ENCODE measurements at regions of chr17 and their contacts with region 1.

Region 1: DNA sequence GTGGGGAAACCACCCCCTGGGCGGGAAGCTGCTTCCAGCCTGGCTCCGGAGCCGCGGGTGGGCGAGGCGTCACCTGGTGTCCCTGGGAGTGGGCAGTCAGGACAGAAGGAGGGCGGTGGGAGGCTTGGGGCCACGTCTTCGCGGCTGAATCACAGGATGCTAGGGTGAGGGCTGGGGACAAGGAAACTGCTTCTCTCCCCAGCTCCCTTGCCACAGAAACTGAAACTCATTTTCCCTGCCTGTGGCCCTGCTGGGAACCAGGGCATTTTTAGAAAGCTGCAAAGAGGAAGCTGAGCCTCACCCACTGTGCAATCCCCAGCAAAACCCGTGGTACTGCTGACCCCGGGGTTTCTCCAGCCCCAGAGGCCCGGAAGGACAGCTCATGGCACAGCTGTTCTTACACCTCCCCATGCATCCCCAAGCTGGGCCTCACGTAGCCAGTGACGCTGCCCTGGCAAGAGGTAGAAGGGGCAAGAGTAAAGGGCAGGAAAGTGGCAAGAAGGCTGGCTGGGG is 8.2 kb downstream of the RHBDF2 start:
- DNase-seq: peak; percentile 68
- H3K4me3 Mint-ChIP-seq: no peak overlapping the region
- H3K27ac Mint-ChIP-seq: no peak overlapping the region
- H3K4me1 Mint-ChIP-seq: peaks cover 20% of the 10 kb centered on the region
- H3K27me3 Mint-ChIP-seq: no peaks in the 10 kb centered on the region
- CTCF ChIP-seq: no peak

Region 2: DNA sequence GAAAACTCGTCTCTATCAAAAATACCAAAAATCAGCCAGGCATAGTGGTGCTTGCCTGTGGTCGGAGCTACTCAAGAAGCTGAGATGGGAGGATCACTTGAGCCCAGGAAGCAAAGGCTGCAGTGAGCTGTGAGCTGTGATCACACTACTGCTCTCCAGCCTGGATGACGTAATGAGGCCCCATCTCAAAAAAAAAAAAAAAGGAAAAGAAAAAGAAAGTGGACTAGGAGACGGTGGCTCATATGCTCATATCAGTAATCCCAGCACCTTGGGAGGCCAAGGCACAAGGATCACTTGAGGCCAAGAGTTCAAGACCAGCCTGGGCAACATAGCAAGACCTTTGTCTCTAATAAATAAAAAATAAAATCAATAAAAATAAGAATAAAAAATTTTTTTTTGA is 1301.5 kb before region 1 on chr17:
- CTCF ChIA-PET with region 1: no interaction called
- POLR2A ChIA-PET with region 1: no interaction called
- intact Hi-C with region 1: no loop called
- DNase-seq: no peak
- H3K4me3 Mint-ChIP-seq: no peak overlapping the region
- H3K27ac Mint-ChIP-seq: no peak overlapping the region
- H3K4me1 Mint-ChIP-seq: peaks cover 6% of the 10 kb centered on the region
- H3K27me3 Mint-ChIP-seq: no peaks in the 10 kb centered on the region
- CTCF ChIP-seq: no peak

Region 3: DNA sequence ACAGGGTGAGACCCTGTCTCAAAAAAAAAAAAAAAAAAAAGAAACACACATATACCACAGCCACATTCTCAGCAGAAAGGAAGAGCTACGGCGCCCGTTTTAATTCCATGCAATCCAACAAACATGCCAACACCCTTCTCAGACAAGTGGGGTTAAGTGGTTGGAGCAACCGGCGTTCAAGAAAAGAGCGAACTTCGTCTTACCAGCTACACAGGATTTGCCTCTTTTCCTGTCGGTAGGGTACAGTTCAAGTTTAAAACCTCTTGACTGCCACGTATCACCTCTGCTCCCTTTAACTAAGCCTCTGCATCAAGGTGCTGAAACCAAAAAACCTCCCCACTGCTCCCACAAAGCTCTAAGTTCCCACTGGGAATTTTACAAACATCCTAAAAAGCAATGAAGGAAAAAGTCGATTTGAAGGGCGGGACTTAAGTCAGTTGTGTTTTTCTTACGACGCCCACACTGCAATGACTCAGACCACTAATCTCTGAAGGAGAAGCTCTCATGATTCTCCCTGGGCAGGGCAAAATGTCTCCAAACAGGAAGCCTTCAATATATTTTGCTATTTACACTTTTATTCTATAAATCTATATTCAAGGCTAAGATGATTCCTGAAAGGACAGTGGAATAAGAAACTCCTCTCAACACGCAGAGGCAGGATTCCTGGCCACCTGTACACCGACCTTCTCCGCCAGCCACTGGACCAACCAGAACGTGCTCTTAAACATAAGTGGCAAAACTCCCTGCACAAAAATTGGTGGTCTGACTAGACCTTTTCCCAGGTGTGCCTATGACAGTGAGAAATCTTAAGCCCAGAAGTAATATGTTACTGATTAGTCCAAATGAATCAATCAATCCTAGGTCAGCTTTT is 439.6 kb before region 1 on chr17:
- CTCF ChIA-PET with region 1: no interaction called
- POLR2A ChIA-PET with region 1: no interaction called
- intact Hi-C with region 1: no loop called
- DNase-seq: peak; percentile 70
- H3K4me3 Mint-ChIP-seq: no peak overlapping the region
- H3K27ac Mint-ChIP-seq: no peak overlapping the region
- H3K4me1 Mint-ChIP-seq: peaks cover 13% of the 10 kb centered on the region
- H3K27me3 Mint-ChIP-seq: no peaks in the 10 kb centered on the region
- CTCF ChIP-seq: no peak

Region 4: GRCh38 chr17:76467366-76467765 is 25.7 kb before region 1 on chr17 and contains the start of gene AANAT:
- CTCF ChIA-PET with region 1: interaction called, 10 read pairs
- POLR2A ChIA-PET with region 1: interaction called, 14 read pairs
- intact Hi-C with region 1: no loop called
- DNase-seq: no peak
- H3K4me3 Mint-ChIP-seq: no peak within 1 kb of the TSS
- H3K27ac Mint-ChIP-seq: no peak within 1 kb of the TSS
- H3K4me1 Mint-ChIP-seq: no peaks in the 10 kb centered on the region
- H3K27me3 Mint-ChIP-seq: no peaks in the 10 kb centered on the region
- CTCF ChIP-seq: no peak
- total RNA-seq, gene AANAT: not detected in 2 replicates

Region 5: GRCh38 chr17:77034677-77035424 is 541.8 kb after region 1 on chr17:
- CTCF ChIA-PET with region 1: no interaction called
- POLR2A ChIA-PET with region 1: no interaction called
- intact Hi-C with region 1: no loop called
- DNase-seq: no peak
- H3K4me3 Mint-ChIP-seq: no peak overlapping the region
- H3K27ac Mint-ChIP-seq: no peak overlapping the region
- H3K4me1 Mint-ChIP-seq: no peaks in the 10 kb centered on the region
- H3K27me3 Mint-ChIP-seq: peaks cover 27% of the 10 kb centered on the region
- CTCF ChIP-seq: no peak

Measured in MCF 10A (cell line).